IMR-90 (cell line): ENCODE measurements at regions of chr7 and their contacts with region 1.

Region 1: DNA sequence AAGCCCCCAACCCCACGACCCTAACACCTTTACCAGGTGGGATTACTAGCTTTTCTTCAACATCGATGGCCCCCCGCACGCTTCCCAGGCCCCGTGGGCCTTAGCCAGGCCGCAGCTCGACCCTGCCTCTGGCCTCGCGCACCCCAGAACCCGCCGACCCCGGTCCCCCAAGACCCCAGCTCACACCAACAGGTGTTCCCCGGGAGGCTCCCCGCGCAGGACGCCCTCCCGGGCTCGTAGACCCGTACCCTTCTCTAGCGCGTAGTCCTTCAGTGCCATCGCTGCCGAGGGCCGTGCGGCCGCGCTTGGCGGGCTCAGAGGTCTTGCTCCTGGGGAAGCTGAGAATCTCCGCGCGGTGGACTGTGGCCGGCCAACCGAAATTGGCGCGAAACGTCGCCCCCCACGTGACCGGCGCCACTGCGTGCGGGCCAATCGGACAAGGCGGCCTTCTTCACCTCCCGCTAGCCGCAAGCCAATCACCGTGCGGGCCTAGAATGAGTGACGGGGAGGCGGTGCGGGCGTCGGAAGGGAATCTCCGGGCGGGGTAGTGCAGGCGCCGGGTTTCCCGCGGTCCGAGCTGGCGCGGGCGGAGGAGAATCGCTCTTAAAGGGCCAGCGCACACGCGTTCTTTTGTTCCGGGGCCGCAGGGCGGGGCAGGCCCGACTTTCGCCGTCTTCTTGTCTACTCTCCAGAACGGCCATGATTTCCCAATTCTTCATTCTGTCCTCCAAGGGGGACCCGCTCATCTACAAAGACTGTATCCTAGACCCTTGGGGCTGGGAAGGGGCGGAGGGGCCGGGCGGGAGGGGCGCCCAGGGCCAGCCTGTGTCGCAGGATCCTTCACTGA is at the starts of genes AP4M1 and MCM7:
- DNase-seq: peak; percentile 99
- ATAC-seq: peak; percentile 80
- H3K4me3 ChIP-seq: peak within 1 kb of the TSS; percentile 54
- H3K27ac ChIP-seq: peak within 1 kb of the TSS; percentile 80
- H3K4me1 ChIP-seq: peaks cover 15% of the 10 kb centered on the region
- H3K27me3 ChIP-seq: no peaks in the 10 kb centered on the region
- CTCF ChIP-seq: no peak
- POLR2A ChIP-seq: peak; percentile 76
- RAD21 ChIP-seq: no peak
- total RNA-seq, gene AP4M1: 18.6 and 21.1 TPM in 2 replicates
- total RNA-seq, gene MCM7: 130 and 137 TPM in 2 replicates

Region 2: DNA sequence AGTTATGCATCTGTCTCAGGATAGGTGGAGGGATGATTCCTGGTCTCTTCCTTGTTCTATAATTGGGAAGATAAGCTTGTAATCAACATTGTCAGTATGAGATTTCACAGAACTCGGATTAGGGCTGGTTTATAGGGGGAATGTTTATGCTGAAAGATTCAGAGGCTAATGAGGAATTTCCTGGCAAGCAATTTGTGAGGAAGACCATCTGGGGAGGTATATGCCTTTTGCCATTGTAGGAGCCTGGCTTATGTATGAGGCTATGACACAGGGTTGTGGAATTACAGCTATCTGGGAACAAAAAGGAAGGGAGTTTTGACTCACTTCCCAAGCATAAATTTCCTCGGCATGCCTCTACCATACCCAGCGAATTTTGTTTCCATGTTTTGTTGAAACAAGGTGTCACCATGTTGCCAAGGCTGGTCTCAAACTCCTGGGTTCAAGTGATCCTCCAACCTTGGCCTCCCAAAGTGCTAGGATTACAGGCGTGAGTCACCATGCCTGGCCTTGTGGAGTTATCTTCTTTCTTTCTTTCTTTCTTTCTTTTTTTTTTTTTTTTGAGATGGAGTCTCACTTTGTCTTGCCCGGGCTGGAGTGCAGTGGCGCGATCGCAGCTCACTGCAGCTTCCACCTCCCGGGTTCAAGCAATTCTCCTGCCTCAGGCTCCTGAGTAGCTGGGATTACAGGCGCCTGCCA is 14.0 kb before region 1 on chr7:
- CTCF ChIA-PET with region 1: interaction called, 5 read pairs
- POLR2A ChIA-PET with region 1: interaction called, 7 read pairs
- dilution Hi-C with region 1: no loop called
- in situ Hi-C with region 1: no loop called
- intact Hi-C with region 1: loop called (anchors 1 kb)
- DNase-seq: peak; percentile 99
- ATAC-seq: peak; percentile 62
- H3K4me3 ChIP-seq: no peak overlapping the region
- H3K27ac ChIP-seq: peak overlapping the region; percentile 100
- H3K4me1 ChIP-seq: peaks cover 21% of the 10 kb centered on the region
- H3K27me3 ChIP-seq: no peaks in the 10 kb centered on the region
- CTCF ChIP-seq: no peak
- POLR2A ChIP-seq: no peak
- RAD21 ChIP-seq: no peak

Region 3: GRCh38 chr7:100119062-100119700 is 17.9 kb after region 1 on chr7 and contains the starts of genes CNPY4 and TAF6:
- CTCF ChIA-PET with region 1: no interaction called
- POLR2A ChIA-PET with region 1: interaction called, 6 read pairs
- dilution Hi-C with region 1: no loop called
- in situ Hi-C with region 1: no loop called
- intact Hi-C with region 1: loop called (anchors 2 kb)
- DNase-seq: peak; percentile 94
- ATAC-seq: peak; percentile 90
- H3K4me3 ChIP-seq: peak within 1 kb of the TSS; percentile 80
- H3K27ac ChIP-seq: peak within 1 kb of the TSS; percentile 81
- H3K4me1 ChIP-seq: peaks cover 6% of the 10 kb centered on the region; the same call in 1 of the 2 replicates
- H3K27me3 ChIP-seq: no peaks in the 10 kb centered on the region
- CTCF ChIP-seq: no peak
- POLR2A ChIP-seq: no peak
- RAD21 ChIP-seq: no peak
- total RNA-seq, gene CNPY4: 13.3 and 20.0 TPM in 2 replicates
- total RNA-seq, gene TAF6: 11.3 and 14.4 TPM in 2 replicates

Region 4: DNA sequence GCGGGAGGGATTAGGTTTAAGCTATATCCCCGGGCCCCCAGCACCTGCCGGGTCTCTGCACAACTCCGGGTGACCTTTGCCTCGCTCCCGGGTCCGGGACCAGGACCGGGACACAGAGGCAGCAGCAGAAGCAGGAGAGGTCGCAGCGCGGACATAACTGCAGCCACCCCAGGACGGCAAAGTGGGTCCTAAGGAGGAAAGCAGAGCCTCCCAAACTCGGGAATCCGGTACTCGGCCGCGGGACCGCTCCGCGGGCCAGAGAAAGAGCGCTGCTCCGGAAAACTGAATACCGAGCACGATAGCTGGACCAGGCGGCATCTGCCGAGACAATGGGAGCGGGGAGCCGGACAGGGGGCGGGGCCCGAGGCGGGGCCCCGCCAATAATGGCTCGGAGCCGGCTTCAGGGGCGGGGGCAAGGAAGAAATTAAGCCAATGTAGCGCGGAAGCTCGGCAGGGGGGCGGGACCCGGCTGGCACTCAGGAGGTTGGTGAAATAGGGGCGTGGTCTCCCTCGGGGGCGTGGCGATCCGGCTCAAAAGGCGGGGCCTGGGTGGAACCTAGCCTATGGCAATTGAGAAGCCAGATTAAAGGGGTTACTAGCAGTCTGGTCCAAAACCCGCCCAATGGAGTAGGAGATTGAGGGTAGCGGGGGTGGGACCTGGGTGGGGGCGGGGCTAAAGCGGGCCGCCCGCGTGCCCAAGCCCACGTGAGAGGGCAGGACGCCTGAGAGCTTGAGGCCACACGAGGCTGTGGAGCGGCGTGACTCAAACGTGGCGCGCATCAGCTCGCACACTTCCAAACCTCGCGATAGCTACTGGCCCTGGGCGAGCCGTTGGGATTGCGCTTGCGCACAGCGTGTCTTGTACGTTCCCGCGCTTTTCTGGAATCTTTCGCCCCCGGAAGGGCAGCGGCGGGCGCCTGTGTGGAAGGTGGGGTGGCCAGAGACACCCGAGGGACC is 76.1 kb after region 1 on chr7 and contains the starts of genes GPC2 and STAG3:
- CTCF ChIA-PET with region 1: no interaction called
- POLR2A ChIA-PET with region 1: no interaction called
- dilution Hi-C with region 1: no loop called
- in situ Hi-C with region 1: no loop called
- intact Hi-C with region 1: no loop called
- DNase-seq: peak; percentile 95
- ATAC-seq: peak; percentile 99
- H3K4me3 ChIP-seq: peak within 1 kb of the TSS; percentile 69
- H3K27ac ChIP-seq: peak within 1 kb of the TSS; percentile 21; the same call in 1 of the 2 replicates
- H3K4me1 ChIP-seq: peaks cover 5% of the 10 kb centered on the region
- H3K27me3 ChIP-seq: no peaks in the 10 kb centered on the region
- CTCF ChIP-seq: no peak
- POLR2A ChIP-seq: no peak
- RAD21 ChIP-seq: no peak
- total RNA-seq, gene GPC2: 1.4 and 1.8 TPM in 2 replicates
- total RNA-seq, gene STAG3: 0.28 and 0.36 TPM in 2 replicates

Region 5: DNA sequence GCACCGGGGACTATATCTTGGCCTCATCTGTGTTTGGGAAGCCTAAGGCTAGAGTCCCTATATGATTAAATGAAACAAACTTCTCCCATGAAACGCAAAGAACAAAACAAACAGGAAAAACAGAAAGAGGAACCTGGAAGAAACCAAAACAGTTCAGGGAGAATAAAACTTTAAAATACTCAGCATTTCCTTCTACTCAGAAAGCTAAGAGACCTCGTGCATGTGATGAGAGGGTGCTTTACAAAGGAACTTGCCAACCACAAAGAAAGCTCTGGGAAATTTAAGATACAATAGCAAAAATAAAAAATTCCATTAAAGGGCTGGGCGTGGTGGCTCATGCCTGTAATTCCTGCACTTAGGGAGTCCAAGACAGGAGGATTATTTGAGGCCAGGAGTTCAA is 279.0 kb after region 1 on chr7:
- CTCF ChIA-PET with region 1: no interaction called
- POLR2A ChIA-PET with region 1: no interaction called
- dilution Hi-C with region 1: no loop called
- in situ Hi-C with region 1: no loop called
- intact Hi-C with region 1: no loop called
- DNase-seq: no peak
- ATAC-seq: no peak
- H3K4me3 ChIP-seq: no peak overlapping the region
- H3K27ac ChIP-seq: no peak overlapping the region
- H3K4me1 ChIP-seq: no peaks in the 10 kb centered on the region
- H3K27me3 ChIP-seq: no peaks in the 10 kb centered on the region; the same call in none of the 2 replicates
- CTCF ChIP-seq: no peak
- POLR2A ChIP-seq: no peak
- RAD21 ChIP-seq: no peak